ENCODE measurements at regions of chr10 and their contacts with region 1.

Region 1: GRCh38 chr10:89055159-89055558 is 64.6 kb downstream of the FAS start:
- DNase-seq: no peak
- ATAC-seq: no peak
- H3K4me3 ChIP-seq: no peak overlapping the region
- H3K27ac ChIP-seq: peak overlapping the region in 2 of 12 donors; percentile 2 to 54
- H3K4me1 ChIP-seq: peaks cover 0 to 19% (median 1%) of the 10 kb centered on the region in 12 donors
- H3K27me3 ChIP-seq: no peaks in the 10 kb centered on the region
- CTCF ChIP-seq: no peak
- POLR2A ChIP-seq: no peak

Region 2: GRCh38 chr10:88725798-88726197 is 329.4 kb before region 1 on chr10:
- intact Hi-C with region 1: no loop called
- DNase-seq: no peak
- ATAC-seq: no peak
- H3K4me3 ChIP-seq: no peak overlapping the region
- H3K27ac ChIP-seq: no peak overlapping the region
- H3K4me1 ChIP-seq: no peaks in the 10 kb centered on the region
- H3K27me3 ChIP-seq: peaks cover 0 to 24% (median 4%) of the 10 kb centered on the region in 9 donors
- CTCF ChIP-seq: no peak
- POLR2A ChIP-seq: no peak

Region 3: GRCh38 chr10:89029785-89030437 is 25.2 kb before region 1 on chr10:
- intact Hi-C with region 1: no loop called
- DNase-seq: peak; percentile 79 to 83 (median 80)
- ATAC-seq: peak in 3 of 4 donors; percentile 64 to 76 (median 71)
- H3K4me3 ChIP-seq: peak overlapping the region in 1 of 12 donors; percentile 21
- H3K27ac ChIP-seq: peak overlapping the region in 2 of 12 donors; percentile 9 to 27
- H3K4me1 ChIP-seq: peaks cover 0 to 35% (median 8%) of the 10 kb centered on the region in 12 donors
- H3K27me3 ChIP-seq: no peaks in the 10 kb centered on the region
- CTCF ChIP-seq: peak; percentile 87 to 97 (median 94)
- POLR2A ChIP-seq: no peak

Region 4: DNA sequence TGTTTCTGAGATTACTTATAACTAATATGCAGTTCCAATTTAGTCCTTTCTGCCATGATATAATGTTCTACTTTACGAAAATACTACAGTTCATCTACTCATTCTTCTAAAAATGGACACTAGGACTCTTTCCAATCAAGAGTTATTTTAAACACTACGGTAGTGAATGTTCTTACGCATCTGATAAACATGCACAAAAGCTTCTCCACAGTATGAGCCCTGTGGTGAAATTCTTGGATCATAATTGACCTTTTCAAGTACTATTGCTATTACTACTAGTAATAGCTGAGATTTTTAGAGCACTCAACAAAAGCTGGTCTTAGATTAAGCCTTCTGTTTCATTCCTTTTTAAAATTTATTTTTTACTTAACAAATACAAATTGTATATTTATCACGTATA is 45.5 kb after region 1 on chr10:
- intact Hi-C with region 1: loop called in 1 of 10 experiments (anchors 5 kb)
- DNase-seq: no peak
- ATAC-seq: peak; percentile 76 to 83 (median 80)
- H3K4me3 ChIP-seq: peak overlapping the region in 3 of 12 donors; percentile 4 to 11 (median 6)
- H3K27ac ChIP-seq: peak overlapping the region in 4 of 12 donors; percentile 1 to 40 (median 10)
- H3K4me1 ChIP-seq: peaks cover 0 to 12% (median 0%) of the 10 kb centered on the region in 12 donors
- H3K27me3 ChIP-seq: no peaks in the 10 kb centered on the region
- CTCF ChIP-seq: no peak
- POLR2A ChIP-seq: no peak